IMR-90 (cell line): ENCODE measurements at regions of chr2 and their contacts with region 1.

Region 1: DNA sequence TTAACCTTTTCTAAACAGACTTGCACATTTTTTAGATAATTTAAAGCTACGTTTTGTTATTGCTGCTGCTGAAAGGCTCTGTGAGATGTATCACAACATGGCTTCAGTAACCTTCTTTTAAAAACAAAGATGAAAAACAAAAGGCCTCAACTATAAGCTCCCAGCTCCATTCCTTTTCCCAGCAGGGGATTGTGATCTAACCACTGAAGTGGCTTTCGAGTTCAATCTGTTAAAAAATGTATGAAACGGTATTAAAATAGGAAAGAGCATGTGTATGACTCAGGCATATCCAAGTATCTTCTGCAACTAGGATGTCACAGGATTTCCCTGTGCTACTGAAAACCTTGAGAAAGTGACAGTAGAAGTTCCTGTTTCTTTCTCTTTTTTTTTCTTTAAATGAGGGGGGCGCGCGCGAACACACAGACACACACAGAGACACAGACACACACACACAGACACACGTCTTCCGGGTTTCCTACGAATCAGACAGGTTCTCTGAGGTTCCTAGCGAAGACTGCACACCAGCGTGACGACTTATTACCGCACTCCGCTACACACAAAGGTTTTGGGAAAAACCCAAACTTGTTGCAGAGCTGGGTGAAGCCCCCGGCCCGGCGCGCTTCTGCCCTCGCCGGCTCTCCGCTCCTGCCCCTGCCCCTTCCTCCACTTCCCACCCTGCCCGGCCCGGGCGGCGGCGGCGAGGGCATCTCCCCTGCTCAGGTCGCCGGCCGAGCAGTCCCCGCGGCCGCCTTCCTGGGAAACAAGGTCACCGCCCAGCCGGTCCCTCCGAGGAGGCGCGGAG is 86.8 kb downstream of the RBMS1 start:
- DNase-seq: peak; percentile 80
- ATAC-seq: peak; percentile 12
- H3K4me3 ChIP-seq: peak overlapping the region; percentile 99
- H3K27ac ChIP-seq: peak overlapping the region; percentile 89
- H3K4me1 ChIP-seq: peaks cover 35% of the 10 kb centered on the region
- H3K27me3 ChIP-seq: no peaks in the 10 kb centered on the region
- CTCF ChIP-seq: no peak
- POLR2A ChIP-seq: peak; percentile 49
- RAD21 ChIP-seq: 0 out of 2 replicates have a peak, but pooled peaks have one; percentile 1

Region 2: GRCh38 chr2:160257015-160257740 is 149.6 kb before region 1 on chr2:
- CTCF ChIA-PET with region 1: no interaction called
- POLR2A ChIA-PET with region 1: no interaction called
- dilution Hi-C with region 1: no loop called
- in situ Hi-C with region 1: no loop called
- intact Hi-C with region 1: no loop called
- DNase-seq: no peak
- ATAC-seq: no peak
- H3K4me3 ChIP-seq: no peak overlapping the region
- H3K27ac ChIP-seq: no peak overlapping the region
- H3K4me1 ChIP-seq: peaks cover 4% of the 10 kb centered on the region
- H3K27me3 ChIP-seq: no peaks in the 10 kb centered on the region
- CTCF ChIP-seq: no peak
- POLR2A ChIP-seq: no peak
- RAD21 ChIP-seq: no peak

Region 3: DNA sequence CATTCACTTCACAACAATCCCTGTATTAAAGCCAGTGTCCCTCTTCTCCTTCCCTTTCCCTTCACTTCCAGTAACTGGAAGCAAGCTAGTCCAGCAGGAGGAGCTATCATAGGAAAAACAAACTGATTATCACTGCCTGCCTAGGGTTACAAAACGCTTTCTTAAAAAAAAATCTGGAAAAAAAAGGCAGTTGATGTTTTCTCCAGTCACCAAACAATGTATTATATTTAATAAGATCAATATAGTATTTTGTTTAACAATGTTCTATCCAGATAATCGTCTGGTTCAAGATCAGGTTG is 128.0 kb before region 1 on chr2:
- CTCF ChIA-PET with region 1: no interaction called
- POLR2A ChIA-PET with region 1: no interaction called
- dilution Hi-C with region 1: no loop called
- in situ Hi-C with region 1: no loop called
- intact Hi-C with region 1: loop called (anchors 2 kb)
- DNase-seq: peak; percentile 57
- ATAC-seq: peak; percentile 82
- H3K4me3 ChIP-seq: no peak overlapping the region
- H3K27ac ChIP-seq: no peak overlapping the region
- H3K4me1 ChIP-seq: peaks cover 1% of the 10 kb centered on the region; the same call in 1 of the 2 replicates
- H3K27me3 ChIP-seq: no peaks in the 10 kb centered on the region
- CTCF ChIP-seq: peak; percentile 52
- POLR2A ChIP-seq: no peak
- RAD21 ChIP-seq: peak; percentile 50

Region 4: DNA sequence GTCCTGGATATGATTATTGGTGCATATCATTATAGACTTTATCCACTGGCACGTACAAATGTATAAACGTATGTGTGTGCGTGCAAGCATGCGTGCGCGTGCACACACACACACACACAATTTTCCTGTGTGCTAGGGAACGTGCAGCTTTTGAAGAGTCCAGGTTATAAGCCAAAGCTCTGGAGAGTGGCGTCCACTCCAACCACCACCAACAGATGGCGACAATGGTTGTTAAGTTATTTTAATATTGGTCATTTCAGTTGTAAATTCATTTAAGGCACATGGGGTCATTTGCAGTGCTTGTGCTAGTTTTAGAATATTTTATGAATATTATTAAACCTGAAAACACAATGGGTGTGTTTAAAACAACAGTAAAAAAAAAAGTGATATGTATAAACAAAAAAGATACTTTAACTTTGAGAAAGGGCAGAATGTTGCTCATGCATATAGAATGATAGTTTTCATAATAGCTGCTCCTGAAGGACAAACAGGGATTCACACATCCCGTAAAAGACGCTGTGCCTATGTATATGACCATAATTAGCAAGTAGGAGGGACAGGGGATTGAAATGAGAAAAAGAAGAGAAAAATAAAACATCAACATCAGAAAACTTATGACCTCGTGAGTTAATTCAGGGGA is 82.5 kb before region 1 on chr2:
- CTCF ChIA-PET with region 1: no interaction called
- POLR2A ChIA-PET with region 1: no interaction called
- dilution Hi-C with region 1: no loop called
- in situ Hi-C with region 1: no loop called
- intact Hi-C with region 1: loop called (anchors 2 kb)
- DNase-seq: peak; percentile 70
- ATAC-seq: peak; percentile 69
- H3K4me3 ChIP-seq: no peak overlapping the region
- H3K27ac ChIP-seq: no peak overlapping the region
- H3K4me1 ChIP-seq: peaks cover 19% of the 10 kb centered on the region
- H3K27me3 ChIP-seq: no peaks in the 10 kb centered on the region
- CTCF ChIP-seq: peak; percentile 71
- POLR2A ChIP-seq: no peak
- RAD21 ChIP-seq: peak; percentile 73

Region 5: GRCh38 chr2:160582490-160583145 is 175.8 kb after region 1 on chr2:
- CTCF ChIA-PET with region 1: interaction called, 3 read pairs
- POLR2A ChIA-PET with region 1: no interaction called
- dilution Hi-C with region 1: no loop called
- in situ Hi-C with region 1: no loop called
- intact Hi-C with region 1: loop called (anchors 10 kb)
- DNase-seq: peak; percentile 75
- ATAC-seq: peak; percentile 81
- H3K4me3 ChIP-seq: no peak overlapping the region
- H3K27ac ChIP-seq: peak overlapping the region; percentile 70; the same call in 1 of the 2 replicates
- H3K4me1 ChIP-seq: peaks cover 18% of the 10 kb centered on the region
- H3K27me3 ChIP-seq: no peaks in the 10 kb centered on the region
- CTCF ChIP-seq: 0 out of 2 replicates have a peak, but pooled peaks have one; percentile 2
- POLR2A ChIP-seq: no peak
- RAD21 ChIP-seq: no peak

Region 6: GRCh38 chr2:160836755-160837154 is 430.0 kb after region 1 on chr2:
- CTCF ChIA-PET with region 1: no interaction called
- POLR2A ChIA-PET with region 1: no interaction called
- dilution Hi-C with region 1: no loop called
- in situ Hi-C with region 1: no loop called
- intact Hi-C with region 1: loop called (anchors 5 kb)
- DNase-seq: peak; percentile 96
- ATAC-seq: peak; percentile 97
- H3K4me3 ChIP-seq: no peak overlapping the region
- H3K27ac ChIP-seq: peak overlapping the region; percentile 76; the same call in 1 of the 2 replicates
- H3K4me1 ChIP-seq: peaks cover 5% of the 10 kb centered on the region
- H3K27me3 ChIP-seq: no peaks in the 10 kb centered on the region
- CTCF ChIP-seq: no peak
- POLR2A ChIP-seq: no peak
- RAD21 ChIP-seq: no peak

Region 7: GRCh38 chr2:160920791-160921303 is 514.1 kb after region 1 on chr2:
- CTCF ChIA-PET with region 1: no interaction called
- POLR2A ChIA-PET with region 1: no interaction called
- dilution Hi-C with region 1: no loop called
- in situ Hi-C with region 1: no loop called
- intact Hi-C with region 1: loop called (anchors 5 kb)
- DNase-seq: peak; percentile 95
- ATAC-seq: peak; percentile 87
- H3K4me3 ChIP-seq: no peak overlapping the region
- H3K27ac ChIP-seq: peak overlapping the region; percentile 97
- H3K4me1 ChIP-seq: peaks cover 16% of the 10 kb centered on the region
- H3K27me3 ChIP-seq: no peaks in the 10 kb centered on the region
- CTCF ChIP-seq: no peak
- POLR2A ChIP-seq: no peak
- RAD21 ChIP-seq: no peak